ENCODE measurements at regions of chr12 and their contacts with region 1.

Region 1: GRCh38 chr12:49967042-49967776 is 5.5 kb downstream of the AQP5 start:
- DNase-seq: peak; percentile 96
- H3K4me3 Mint-ChIP-seq: peak overlapping the region; percentile 54
- H3K27ac Mint-ChIP-seq: no peak overlapping the region
- H3K4me1 Mint-ChIP-seq: no peaks in the 10 kb centered on the region
- H3K27me3 Mint-ChIP-seq: peaks cover 33% of the 10 kb centered on the region

Region 2: GRCh38 chr12:49784756-49785409 is 182.3 kb before region 1 on chr12:
- CTCF ChIA-PET with region 1: no interaction called
- intact Hi-C with region 1: no loop called
- DNase-seq: no peak
- H3K4me3 Mint-ChIP-seq: no peak overlapping the region
- H3K27ac Mint-ChIP-seq: no peak overlapping the region
- H3K4me1 Mint-ChIP-seq: no peaks in the 10 kb centered on the region
- H3K27me3 Mint-ChIP-seq: peaks cover 4% of the 10 kb centered on the region

Region 3: GRCh38 chr12:49930515-49931288 is 36.5 kb before region 1 on chr12:
- CTCF ChIA-PET with region 1: interaction called, 10 read pairs
- intact Hi-C with region 1: no loop called
- DNase-seq: peak; percentile 19
- H3K4me3 Mint-ChIP-seq: no peak overlapping the region
- H3K27ac Mint-ChIP-seq: no peak overlapping the region
- H3K4me1 Mint-ChIP-seq: peaks cover 7% of the 10 kb centered on the region
- H3K27me3 Mint-ChIP-seq: peaks cover 1% of the 10 kb centered on the region

Region 4: DNA sequence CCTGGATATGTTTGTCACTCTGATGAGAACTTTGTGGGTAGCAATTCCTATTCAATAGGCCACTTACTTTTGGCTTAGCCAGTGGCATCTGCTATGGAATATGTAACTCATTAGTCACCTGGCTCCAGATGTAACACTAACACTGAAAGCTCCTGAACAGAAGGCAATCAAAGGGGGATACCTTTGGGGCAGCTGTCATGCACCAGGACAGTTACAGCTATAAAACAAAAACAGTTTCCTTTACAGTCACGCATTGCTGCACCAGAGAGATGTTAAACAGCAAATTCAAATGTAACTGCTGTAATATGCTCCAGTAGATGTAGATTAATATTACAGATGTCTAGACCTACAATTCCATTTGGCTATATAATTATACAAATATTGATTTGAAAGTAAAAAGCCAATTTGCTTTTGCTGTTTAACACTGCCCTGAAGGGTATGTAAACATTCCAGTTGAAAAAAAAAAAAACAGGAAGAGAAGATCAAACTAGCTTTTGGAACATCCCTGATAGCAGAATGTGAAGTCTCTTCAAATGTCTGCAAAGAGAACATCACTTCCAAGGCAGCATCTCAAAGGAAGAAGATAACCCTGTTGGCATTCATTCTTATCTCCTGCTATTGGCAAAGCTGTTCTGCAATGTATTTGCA is 39.7 kb after region 1 on chr12:
- CTCF ChIA-PET with region 1: interaction called, 14 read pairs
- intact Hi-C with region 1: no loop called
- DNase-seq: no peak
- H3K4me3 Mint-ChIP-seq: no peak overlapping the region
- H3K27ac Mint-ChIP-seq: no peak overlapping the region
- H3K4me1 Mint-ChIP-seq: peaks cover 2% of the 10 kb centered on the region
- H3K27me3 Mint-ChIP-seq: no peaks in the 10 kb centered on the region

Region 5: GRCh38 chr12:50038336-50038735 is 71.1 kb after region 1 on chr12:
- CTCF ChIA-PET with region 1: interaction called, 19 read pairs
- intact Hi-C with region 1: loop called (anchors 1 kb)
- DNase-seq: no peak
- H3K4me3 Mint-ChIP-seq: no peak overlapping the region
- H3K27ac Mint-ChIP-seq: no peak overlapping the region
- H3K4me1 Mint-ChIP-seq: peaks cover 5% of the 10 kb centered on the region
- H3K27me3 Mint-ChIP-seq: peaks cover 9% of the 10 kb centered on the region

Region 6: GRCh38 chr12:50066433-50066832 is 99.2 kb after region 1 on chr12:
- CTCF ChIA-PET with region 1: interaction called, 67 read pairs
- intact Hi-C with region 1: loop called (anchors 1 kb)
- DNase-seq: no peak
- H3K4me3 Mint-ChIP-seq: no peak overlapping the region
- H3K27ac Mint-ChIP-seq: no peak overlapping the region
- H3K4me1 Mint-ChIP-seq: peaks cover 4% of the 10 kb centered on the region
- H3K27me3 Mint-ChIP-seq: no peaks in the 10 kb centered on the region

Measured in activated naive CD4-positive, alpha-beta T cell treated with anti-CD3 and anti-CD28 coated beads for 36 hours (primary cell).